Mucosa of descending colon (tissue), 3 donors: ENCODE measurements at regions of chr2 and their contacts with region 1.

Region 1: GRCh38 chr2:15636972-15637785 is 45.5 kb downstream of the DDX1 start:
- DNase-seq: peak in 2 of 3 donors; percentile 58 to 81
- ATAC-seq: peak; percentile 83
- H3K4me3 ChIP-seq: no peak overlapping the region
- H3K4me1 ChIP-seq: no peaks in the 10 kb centered on the region
- CTCF ChIP-seq: peak; percentile 51

Region 2: GRCh38 chr2:16069933-16070647 is 432.9 kb after region 1 on chr2:
- intact Hi-C with region 1: no loop called
- DNase-seq: no peak
- ATAC-seq: no peak
- H3K4me3 ChIP-seq: no peak overlapping the region
- H3K4me1 ChIP-seq: peaks cover 3% of the 10 kb centered on the region
- CTCF ChIP-seq: no peak

Region 3: GRCh38 chr2:16507655-16508489 is 870.7 kb after region 1 on chr2:
- intact Hi-C with region 1: loop called (anchors 5 to 10 kb)
- DNase-seq: peak; percentile 48 to 70 (median 53)
- ATAC-seq: peak; percentile 92
- H3K4me3 ChIP-seq: no peak overlapping the region
- H3K4me1 ChIP-seq: peaks cover 9% of the 10 kb centered on the region
- CTCF ChIP-seq: peak; percentile 44